IMR-90 (cell line): ENCODE measurements at regions of chr22 and their contacts with region 1.

Region 1: GRCh38 chr22:35739076-35739930 is 21.6 kb downstream of the APOL5 start:
- DNase-seq: no peak
- ATAC-seq: no peak
- H3K4me3 ChIP-seq: no peak overlapping the region
- H3K27ac ChIP-seq: no peak overlapping the region
- H3K4me1 ChIP-seq: peaks cover 15% of the 10 kb centered on the region
- H3K27me3 ChIP-seq: no peaks in the 10 kb centered on the region
- CTCF ChIP-seq: peak; percentile 20; the same call in 1 of the 2 replicates
- POLR2A ChIP-seq: no peak
- RAD21 ChIP-seq: no peak

Region 2: GRCh38 chr22:33889748-33890147 is 1849.6 kb before region 1 on chr22:
- CTCF ChIA-PET with region 1: no interaction called
- POLR2A ChIA-PET with region 1: no interaction called
- dilution Hi-C with region 1: no loop called
- in situ Hi-C with region 1: no loop called
- intact Hi-C with region 1: no loop called
- DNase-seq: no peak
- ATAC-seq: no peak
- H3K4me3 ChIP-seq: no peak overlapping the region
- H3K27ac ChIP-seq: no peak overlapping the region
- H3K4me1 ChIP-seq: no peaks in the 10 kb centered on the region
- H3K27me3 ChIP-seq: no peaks in the 10 kb centered on the region
- CTCF ChIP-seq: no peak
- POLR2A ChIP-seq: no peak
- RAD21 ChIP-seq: no peak

Region 3: DNA sequence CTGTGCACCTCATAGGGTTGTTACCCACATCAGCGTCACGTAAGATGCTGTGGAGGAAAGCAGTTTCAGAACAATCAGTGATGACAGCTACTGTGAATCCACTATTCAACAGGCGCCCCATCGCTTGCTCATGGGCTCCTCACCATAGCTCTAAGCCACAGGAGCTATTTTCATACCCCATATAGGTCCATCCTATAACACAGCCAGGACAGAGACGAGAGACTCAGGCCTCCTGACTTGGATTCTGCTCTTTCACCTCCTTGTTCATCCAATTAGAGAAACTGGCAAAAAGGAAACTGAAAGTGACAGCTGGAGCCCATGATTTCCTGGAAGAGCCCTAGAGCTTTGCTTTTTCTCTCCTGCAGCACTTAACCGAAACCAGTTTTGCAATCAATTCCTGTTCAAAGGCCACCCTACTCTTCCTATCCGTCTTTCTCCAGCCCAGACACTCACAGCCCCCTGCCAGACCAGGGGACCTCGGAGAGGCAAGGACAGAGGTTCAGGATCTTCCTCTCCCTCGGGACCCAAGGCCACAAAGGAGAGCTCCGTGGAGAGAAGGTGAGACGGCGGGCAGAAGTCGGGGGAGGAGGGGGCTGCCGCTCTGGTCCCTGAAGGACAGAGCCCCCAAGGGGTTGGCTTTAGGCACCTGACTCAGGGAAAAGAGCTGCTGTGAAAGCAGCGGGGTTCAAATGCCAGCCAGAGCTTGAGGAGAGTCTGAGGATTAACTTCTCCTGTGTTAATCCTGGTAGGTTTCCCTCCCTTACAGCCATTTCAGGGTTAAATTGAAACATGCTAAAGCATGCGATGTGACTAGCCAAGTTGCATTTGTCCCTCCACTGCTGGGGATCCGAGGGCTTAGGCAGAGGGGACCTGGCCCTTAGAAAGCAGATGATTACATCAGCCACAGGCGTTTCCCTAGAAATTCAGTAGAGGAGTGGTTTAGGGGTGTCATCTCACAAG is 91.0 kb before region 1 on chr22 and contains the start of gene APOL6:
- CTCF ChIA-PET with region 1: no interaction called
- POLR2A ChIA-PET with region 1: no interaction called
- dilution Hi-C with region 1: no loop called
- in situ Hi-C with region 1: no loop called
- intact Hi-C with region 1: loop called (anchors 5 kb)
- DNase-seq: peak; percentile 76
- ATAC-seq: peak; percentile 45
- H3K4me3 ChIP-seq: peak within 1 kb of the TSS; percentile 73
- H3K27ac ChIP-seq: peak within 1 kb of the TSS; percentile 95
- H3K4me1 ChIP-seq: peaks cover 10% of the 10 kb centered on the region
- H3K27me3 ChIP-seq: no peaks in the 10 kb centered on the region
- CTCF ChIP-seq: no peak
- POLR2A ChIP-seq: 0 out of 2 replicates have a peak, but pooled peaks have one; percentile 26
- RAD21 ChIP-seq: no peak
- total RNA-seq, gene APOL6: 7.2 TPM in 2 replicates

Region 4: DNA sequence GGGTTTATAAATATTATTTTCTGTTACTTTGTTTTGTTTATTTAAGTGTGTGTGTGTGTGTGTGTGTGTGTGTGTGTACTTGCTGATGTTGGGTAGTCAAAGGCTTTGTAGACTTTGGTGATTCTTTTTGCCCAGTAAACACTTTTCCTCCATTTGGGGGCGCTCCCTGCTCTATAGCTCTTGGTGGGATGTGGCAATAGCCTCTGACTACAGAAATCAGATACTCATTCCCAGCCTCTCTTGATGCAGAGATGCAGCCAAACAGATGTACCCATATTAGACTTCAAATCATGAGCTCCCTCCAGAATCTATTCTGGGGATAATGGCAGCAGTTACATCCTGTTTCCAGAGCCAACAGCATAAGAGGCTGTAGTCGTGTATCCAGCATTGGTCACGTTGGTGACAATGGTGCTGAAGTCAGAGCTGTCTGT is 55.0 kb before region 1 on chr22:
- CTCF ChIA-PET with region 1: no interaction called
- POLR2A ChIA-PET with region 1: no interaction called
- dilution Hi-C with region 1: no loop called
- in situ Hi-C with region 1: no loop called
- intact Hi-C with region 1: loop called (anchors 2 kb)
- DNase-seq: peak; percentile 38
- ATAC-seq: peak; percentile 35
- H3K4me3 ChIP-seq: no peak overlapping the region
- H3K27ac ChIP-seq: no peak overlapping the region
- H3K4me1 ChIP-seq: no peaks in the 10 kb centered on the region; the same call in 1 of the 2 replicates
- H3K27me3 ChIP-seq: no peaks in the 10 kb centered on the region
- CTCF ChIP-seq: peak; percentile 47
- POLR2A ChIP-seq: no peak
- RAD21 ChIP-seq: peak; percentile 35

Region 5: GRCh38 chr22:35921777-35922176 is 182.5 kb after region 1 on chr22:
- CTCF ChIA-PET with region 1: no interaction called
- POLR2A ChIA-PET with region 1: no interaction called
- dilution Hi-C with region 1: no loop called
- in situ Hi-C with region 1: no loop called
- intact Hi-C with region 1: loop called (anchors 5 kb)
- DNase-seq: peak; percentile 90
- ATAC-seq: peak; percentile 94
- H3K4me3 ChIP-seq: no peak overlapping the region
- H3K27ac ChIP-seq: no peak overlapping the region
- H3K4me1 ChIP-seq: peaks cover 6% of the 10 kb centered on the region
- H3K27me3 ChIP-seq: no peaks in the 10 kb centered on the region
- CTCF ChIP-seq: peak; percentile 80
- POLR2A ChIP-seq: no peak
- RAD21 ChIP-seq: peak; percentile 93